Posterior vena cava (tissue), 2 donors: ENCODE measurements at regions of chr11 and their contacts with region 1.

Region 1: DNA sequence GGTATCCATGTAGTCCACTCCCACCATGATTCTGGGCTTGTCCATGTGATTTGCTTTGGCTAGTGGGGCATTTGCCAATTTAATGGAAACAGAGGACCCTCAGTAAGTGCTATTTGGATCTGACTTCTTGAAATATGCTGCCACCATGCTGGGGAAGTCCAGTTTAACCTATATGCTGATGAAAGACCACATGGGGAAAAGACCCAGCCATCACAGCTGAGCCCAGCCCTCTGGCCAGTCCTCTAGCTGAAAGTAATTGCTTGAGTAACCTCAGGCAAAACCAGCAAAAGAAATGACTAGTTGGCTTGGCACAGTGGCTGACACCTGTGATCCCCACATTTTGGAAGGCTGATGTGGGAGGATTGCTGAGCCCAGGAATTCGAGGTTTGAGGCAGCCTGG is 61.5 kb downstream of the ATG16L2 start:
- DNase-seq: no peak

Region 2: DNA sequence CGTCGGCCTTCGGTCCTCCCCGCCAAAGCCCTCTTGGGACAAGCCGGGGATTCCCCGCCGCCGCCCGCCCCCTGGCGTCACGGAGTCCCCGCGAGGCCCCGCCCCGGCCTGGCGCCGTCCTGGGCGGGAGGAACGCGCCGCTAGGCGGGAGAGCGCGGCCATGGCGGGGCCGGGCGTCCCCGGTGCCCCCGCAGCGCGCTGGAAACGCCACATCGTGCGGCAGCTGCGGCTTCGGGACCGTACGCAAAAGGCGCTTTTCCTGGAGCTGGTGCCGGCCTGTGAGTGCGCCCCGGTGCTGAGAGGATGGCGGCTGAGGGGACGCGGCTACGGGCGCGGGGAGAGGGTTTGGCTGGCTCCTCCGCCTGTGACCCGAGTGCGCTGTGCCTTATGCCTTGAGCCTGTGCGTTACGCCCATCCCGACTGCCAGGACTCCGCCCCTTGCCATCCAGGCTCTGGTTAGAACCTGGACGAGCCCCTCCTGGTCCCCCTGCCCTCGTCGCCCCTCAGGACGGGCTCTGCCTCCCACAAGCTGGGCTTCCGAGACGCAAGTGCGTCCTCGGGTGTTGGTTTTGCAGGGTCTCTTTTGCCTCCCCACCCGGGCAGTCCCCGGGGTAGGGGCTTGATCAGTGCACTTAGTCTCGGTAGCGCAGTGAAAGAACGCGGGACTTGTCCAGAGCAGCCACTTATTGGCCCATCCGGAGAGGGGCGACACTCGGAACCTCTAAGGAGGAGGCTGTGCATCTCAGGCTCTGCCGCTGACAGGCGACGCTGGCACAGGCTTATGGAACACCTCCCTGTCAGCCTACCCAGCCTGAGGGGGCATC is 61.2 kb before region 1 on chr11 and contains the start of gene ATG16L2:
- intact Hi-C with region 1: no loop called
- DNase-seq: peak; percentile 96
- total RNA-seq, gene ATG16L2: 13.5 to 17.6 TPM

Region 3: DNA sequence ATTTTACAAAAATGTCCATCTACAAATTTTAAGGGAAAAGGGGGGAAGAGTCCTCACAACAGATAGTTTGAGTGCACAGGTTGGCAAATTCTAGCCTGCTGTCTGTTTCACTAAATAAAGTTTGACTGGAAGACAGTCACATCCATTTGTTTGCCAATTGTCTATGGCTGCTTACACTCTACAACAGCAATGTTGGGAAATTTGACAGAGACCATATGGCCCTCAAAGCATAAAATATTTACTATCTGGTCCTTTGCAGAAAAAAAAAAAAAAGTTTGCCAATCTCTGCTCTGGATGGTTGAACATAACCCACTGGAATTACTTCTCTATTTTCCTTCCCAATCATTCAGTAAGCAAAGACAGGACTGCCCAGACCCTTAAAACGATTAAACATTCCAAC is 178.2 kb after region 1 on chr11:
- intact Hi-C with region 1: loop called in 1 of 2 experiments (anchors 5 kb)
- DNase-seq: no peak